GM10248 (cell line): ENCODE measurements at regions of chr16 and their contacts with region 1.

Region 1: DNA sequence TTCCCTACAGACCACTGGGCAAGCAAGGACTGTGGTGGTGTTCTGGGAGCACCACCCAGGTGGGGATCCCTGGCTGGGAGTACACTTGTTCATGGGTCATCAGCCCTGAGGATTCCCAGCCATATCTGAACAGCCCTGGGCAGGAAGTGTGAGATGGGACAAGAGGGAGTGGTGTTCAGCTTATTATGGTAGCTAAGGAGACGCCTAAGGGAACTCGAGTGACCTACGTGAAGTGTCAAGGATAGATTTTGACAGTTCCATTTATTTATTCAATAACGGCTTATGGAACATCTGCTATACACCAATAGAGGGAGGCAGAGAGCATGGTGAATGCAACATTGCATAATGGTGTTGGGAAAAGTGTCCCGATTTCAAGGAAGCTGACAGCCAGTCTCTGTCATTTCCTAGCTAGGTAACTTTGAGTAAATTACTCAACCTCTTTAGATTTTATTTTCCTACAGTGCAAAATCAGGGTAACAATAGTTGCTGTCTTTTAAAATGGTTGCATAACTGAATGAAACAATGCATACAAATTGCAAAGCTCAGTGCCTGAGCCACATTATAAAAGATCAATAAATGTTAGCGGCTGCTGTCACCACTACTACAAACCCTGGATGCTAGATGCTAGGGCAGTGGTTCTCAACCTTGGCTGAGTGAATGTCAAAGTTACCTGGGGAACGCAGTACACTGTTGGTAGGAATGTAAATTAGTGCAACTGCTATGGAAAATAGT is 534.1 kb downstream of the GRIN2A start:
- DNase-seq: peak; percentile 20
- CTCF ChIP-seq: peak; percentile 71

Region 2: GRCh38 chr16:9614389-9614788 is 33.8 kb before region 1 on chr16:
- CTCF ChIA-PET with region 1: no interaction called
- POLR2A ChIA-PET with region 1: no interaction called
- DNase-seq: no peak
- CTCF ChIP-seq: no peak

Region 3: GRCh38 chr16:9665851-9666271 is 17.7 kb after region 1 on chr16:
- CTCF ChIA-PET with region 1: interaction called, 15 read pairs
- POLR2A ChIA-PET with region 1: interaction called, 3 read pairs
- DNase-seq: no peak
- CTCF ChIP-seq: no peak

Region 4: GRCh38 chr16:9679213-9679767 is 31.1 kb after region 1 on chr16:
- CTCF ChIA-PET with region 1: no interaction called
- POLR2A ChIA-PET with region 1: no interaction called
- DNase-seq: no peak
- CTCF ChIP-seq: no peak

Region 5: DNA sequence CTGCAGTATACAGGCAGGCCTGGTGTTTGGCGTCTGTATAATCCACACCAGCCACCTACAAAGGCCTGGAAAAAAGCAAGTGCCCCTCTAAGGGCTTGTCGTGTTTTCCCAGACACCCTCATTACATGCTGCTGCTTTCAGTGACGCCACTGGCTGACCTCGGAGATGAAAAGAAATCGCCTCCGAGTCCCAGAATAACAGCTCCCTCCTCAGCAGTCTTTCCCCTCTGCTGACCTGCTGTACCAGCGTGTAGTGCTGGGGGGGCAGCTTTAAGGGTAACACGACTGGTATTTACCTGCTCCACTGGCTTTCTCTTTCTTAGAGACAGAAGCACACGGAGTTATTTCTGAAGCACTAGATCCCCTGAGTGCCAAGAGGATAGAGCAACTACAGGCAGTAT is 237.3 kb after region 1 on chr16:
- CTCF ChIA-PET with region 1: no interaction called
- POLR2A ChIA-PET with region 1: no interaction called
- DNase-seq: no peak
- CTCF ChIP-seq: no peak

Region 6: GRCh38 chr16:10181196-10182162 is 533.3 kb after region 1 on chr16:
- CTCF ChIA-PET with region 1: interaction called, 11 read pairs
- POLR2A ChIA-PET with region 1: no interaction called
- DNase-seq: peak; percentile 85
- CTCF ChIP-seq: peak; percentile 82